RWPE1 (cell line): ENCODE measurements at regions of chr16 and their contacts with region 1.

Region 1: DNA sequence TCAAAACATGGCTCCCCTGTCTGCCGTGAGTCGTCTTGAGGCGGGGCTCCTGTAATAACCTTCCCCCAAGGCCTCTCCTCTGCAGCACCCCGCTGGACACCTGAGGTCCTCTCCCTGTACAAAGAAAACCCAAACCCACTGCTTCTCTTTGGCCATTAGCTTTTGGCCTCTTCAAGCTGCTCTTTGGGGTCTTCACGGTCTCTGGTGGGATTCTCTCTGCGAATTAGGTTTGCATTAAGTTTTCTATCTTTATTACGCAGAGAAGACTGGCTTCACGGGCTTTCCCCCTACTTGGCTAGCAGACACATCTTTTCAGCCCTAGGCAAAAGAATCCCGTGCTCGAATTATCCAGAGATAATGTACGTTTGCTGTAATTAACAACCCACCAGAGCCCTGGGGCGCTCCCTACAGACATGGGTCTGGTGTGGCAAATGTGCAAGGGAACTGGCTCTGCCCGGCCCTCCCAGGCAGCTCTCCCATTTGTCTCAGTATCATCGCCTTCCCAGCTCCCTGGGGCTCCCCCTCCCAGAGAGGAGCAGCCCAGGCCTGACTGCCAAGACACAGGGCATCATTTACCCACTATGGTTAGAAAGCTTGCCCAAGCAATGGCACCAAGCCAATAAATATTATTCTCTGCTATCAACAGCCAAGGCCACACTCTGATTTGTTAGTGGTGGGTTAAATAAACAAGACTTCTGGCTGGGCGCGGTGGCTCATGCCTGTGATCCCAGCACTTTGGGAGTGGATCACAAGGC is 24.7 kb upstream of the KLHDC4 start:
- DNase-seq: peak; percentile 85
- H3K27ac ChIP-seq: peak overlapping the region; percentile 100
- CTCF ChIP-seq: no peak

Region 2: GRCh38 chr16:87740909-87741424 is 49.5 kb before region 1 on chr16:
- CTCF ChIA-PET with region 1: no interaction called
- POLR2A ChIA-PET with region 1: no interaction called
- DNase-seq: no peak
- H3K27ac ChIP-seq: peak overlapping the region; percentile 49
- CTCF ChIP-seq: no peak

Region 3: GRCh38 chr16:87806603-87807546 is 16.4 kb after region 1 on chr16:
- CTCF ChIA-PET with region 1: interaction called, 10 read pairs
- POLR2A ChIA-PET with region 1: interaction called, 12 read pairs
- DNase-seq: peak; percentile 98
- H3K27ac ChIP-seq: peak overlapping the region; percentile 100
- CTCF ChIP-seq: no peak